ENCODE measurements at regions of chr2 and their contacts with region 1.

Region 1: DNA sequence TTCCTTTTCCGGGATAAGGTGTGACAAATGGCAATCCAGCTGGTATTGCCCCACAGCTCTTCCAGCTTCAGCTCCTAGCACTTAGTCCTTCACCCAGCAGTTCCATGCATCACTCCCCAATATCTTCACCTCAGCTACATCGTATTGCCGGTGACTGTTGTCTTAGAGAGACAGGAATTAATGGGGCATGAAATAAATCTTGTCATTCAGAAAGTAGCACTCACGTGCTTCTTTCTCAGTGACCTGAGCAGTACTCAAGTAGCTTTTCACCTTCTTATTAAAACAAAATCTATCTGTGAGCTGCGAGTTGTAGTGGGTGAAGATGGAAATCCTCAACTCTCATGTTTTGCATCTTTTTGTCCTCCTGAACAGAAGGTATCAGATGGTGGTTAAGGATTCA is 72.8 kb downstream of the PTH2R start:
- DNase-seq: no peak
- CTCF ChIP-seq: no peak

Region 2: DNA sequence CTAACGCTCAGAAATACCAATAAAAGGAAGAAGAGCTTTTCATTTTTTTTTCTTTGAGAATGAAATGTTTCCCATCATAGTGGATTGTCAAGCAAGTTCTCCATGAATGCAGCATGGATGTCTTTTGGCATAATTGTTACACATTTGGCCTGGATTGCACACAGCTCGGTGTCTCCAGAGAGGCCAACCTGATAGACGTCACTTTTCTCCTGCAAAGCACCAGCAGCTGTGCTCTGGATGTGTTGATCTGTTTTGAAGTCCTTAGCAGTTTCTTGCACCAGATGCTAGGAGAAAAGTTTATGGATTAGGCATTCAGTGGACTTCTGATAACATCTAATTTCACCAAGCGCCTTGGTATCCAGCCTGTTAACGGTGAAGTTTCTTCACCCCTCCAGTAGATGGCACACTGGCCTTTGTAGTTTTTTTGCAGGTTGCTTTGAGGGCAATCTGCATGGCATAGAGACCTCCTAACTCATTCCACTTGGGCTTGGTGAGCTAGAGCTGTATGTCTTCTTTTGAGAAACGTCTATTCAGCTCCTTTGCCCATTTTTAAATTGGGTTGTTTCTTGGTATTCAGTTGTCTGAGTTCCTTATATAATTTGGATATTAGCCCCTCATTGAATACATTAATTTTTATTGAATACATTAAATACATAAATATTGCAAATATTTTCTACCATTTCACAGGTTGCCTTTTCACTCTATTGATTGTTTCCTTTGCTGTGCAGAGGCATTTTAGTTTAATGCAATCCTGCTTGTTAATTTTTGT is 13.0 kb before region 1 on chr2:
- CTCF ChIA-PET with region 1: interaction called, 14 read pairs
- POLR2A ChIA-PET with region 1: no interaction called
- DNase-seq: peak; percentile 26
- CTCF ChIP-seq: peak; percentile 55

Region 3: GRCh38 chr2:208496129-208496528 is 16.8 kb after region 1 on chr2:
- CTCF ChIA-PET with region 1: no interaction called
- POLR2A ChIA-PET with region 1: no interaction called
- DNase-seq: no peak
- CTCF ChIP-seq: no peak

Region 4: GRCh38 chr2:208608127-208608806 is 128.9 kb after region 1 on chr2:
- CTCF ChIA-PET with region 1: no interaction called
- POLR2A ChIA-PET with region 1: no interaction called
- DNase-seq: no peak
- CTCF ChIP-seq: no peak

Measured in GM10248 (cell line).